BJ (cell line): ENCODE measurements at regions of chr16 and their contacts with region 1.

Region 1: GRCh38 chr16:19583665-19584300 is 28.3 kb downstream of the VPS35L start:
- DNase-seq: no peak
- H3K4me3 ChIP-seq: no peak overlapping the region
- H3K27me3 ChIP-seq: no peaks in the 10 kb centered on the region
- CTCF ChIP-seq: peak; percentile 95

Region 2: DNA sequence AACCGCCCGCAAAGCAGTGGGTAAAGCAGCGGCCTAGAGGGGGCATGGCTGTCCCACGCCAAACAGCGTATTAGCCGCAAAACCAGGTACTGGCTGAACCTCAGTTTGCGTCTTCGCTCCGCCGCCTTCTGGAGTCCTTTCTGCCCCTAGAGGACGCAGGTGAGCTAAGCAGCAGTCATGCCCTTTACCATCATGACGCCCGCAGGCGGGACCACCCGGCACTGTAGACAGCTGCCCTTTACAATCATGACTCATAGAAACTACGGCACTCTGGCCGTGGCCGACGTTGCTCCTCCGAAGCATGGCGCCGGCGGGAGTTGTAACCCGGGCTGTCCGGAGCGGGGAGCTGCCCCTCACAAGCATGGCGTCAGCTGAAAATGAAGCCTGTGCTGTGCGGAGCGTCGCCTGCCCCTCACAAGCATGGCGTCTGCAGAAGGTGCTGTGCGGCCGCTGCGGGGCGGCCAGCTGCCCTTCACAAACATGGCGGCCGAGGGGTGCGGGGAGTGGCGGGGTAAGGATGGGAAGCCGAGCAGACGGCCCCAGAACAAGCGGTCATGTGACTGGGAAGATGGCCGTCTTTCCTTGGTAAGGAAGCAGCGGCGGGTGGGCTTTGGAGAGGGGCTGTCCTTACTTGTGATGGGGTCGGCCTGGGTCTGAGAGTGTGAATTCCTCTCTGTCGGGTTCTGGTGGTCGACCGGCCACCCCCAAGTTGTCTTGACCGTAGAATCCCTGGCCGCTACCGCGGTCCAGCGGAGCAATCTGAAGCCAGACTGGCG is 28.4 kb before region 1 on chr16 and contains the start of gene VPS35L:
- CTCF ChIA-PET with region 1: interaction called, 24 read pairs
- POLR2A ChIA-PET with region 1: no interaction called
- DNase-seq: peak; percentile 94
- H3K4me3 ChIP-seq: peak within 1 kb of the TSS; percentile 72
- H3K27me3 ChIP-seq: no peaks in the 10 kb centered on the region
- CTCF ChIP-seq: peak; percentile 83
- polyA plus RNA-seq, gene VPS35L: 40.1 and 83.2 TPM in 2 replicates

Region 3: GRCh38 chr16:19595043-19595767 is 11.4 kb after region 1 on chr16:
- CTCF ChIA-PET with region 1: interaction called, 46 read pairs
- POLR2A ChIA-PET with region 1: no interaction called
- DNase-seq: peak; percentile 37
- H3K4me3 ChIP-seq: no peak overlapping the region
- H3K27me3 ChIP-seq: no peaks in the 10 kb centered on the region
- CTCF ChIP-seq: no peak

Region 4: GRCh38 chr16:19613834-19614233 is 30.1 kb after region 1 on chr16:
- CTCF ChIA-PET with region 1: interaction called, 10 read pairs
- POLR2A ChIA-PET with region 1: no interaction called
- DNase-seq: no peak
- H3K4me3 ChIP-seq: no peak overlapping the region
- H3K27me3 ChIP-seq: no peaks in the 10 kb centered on the region
- CTCF ChIP-seq: no peak

Region 5: DNA sequence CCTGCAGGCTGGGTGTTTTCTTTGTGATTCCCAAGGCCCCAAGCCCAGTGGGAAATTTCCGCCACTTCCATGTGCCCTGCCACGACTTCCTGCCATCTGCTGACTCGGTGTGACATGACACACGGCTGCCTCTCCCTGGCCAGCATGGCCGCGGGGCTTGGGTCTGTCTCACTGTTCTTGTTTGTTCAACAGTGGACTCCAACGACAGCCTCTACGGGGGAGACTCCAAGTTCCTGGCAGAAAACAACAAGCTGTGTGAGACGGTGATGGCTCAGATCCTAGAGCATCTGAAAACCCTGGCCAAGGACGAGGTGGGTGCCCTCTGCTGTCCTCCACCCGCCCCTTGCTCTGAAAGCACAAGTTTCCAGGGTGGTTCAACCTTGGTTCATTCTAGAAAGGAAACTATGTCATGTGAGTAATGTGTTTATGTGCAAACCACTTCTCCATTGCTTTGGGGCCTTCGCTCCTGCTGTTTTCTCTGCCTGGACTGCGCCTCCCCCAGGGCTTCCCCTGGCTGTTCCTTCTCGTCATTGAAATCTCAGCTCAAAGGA is 107.5 kb after region 1 on chr16:
- CTCF ChIA-PET with region 1: no interaction called
- POLR2A ChIA-PET with region 1: no interaction called
- DNase-seq: no peak
- H3K4me3 ChIP-seq: no peak overlapping the region
- H3K27me3 ChIP-seq: no peaks in the 10 kb centered on the region
- CTCF ChIP-seq: no peak

Region 6: DNA sequence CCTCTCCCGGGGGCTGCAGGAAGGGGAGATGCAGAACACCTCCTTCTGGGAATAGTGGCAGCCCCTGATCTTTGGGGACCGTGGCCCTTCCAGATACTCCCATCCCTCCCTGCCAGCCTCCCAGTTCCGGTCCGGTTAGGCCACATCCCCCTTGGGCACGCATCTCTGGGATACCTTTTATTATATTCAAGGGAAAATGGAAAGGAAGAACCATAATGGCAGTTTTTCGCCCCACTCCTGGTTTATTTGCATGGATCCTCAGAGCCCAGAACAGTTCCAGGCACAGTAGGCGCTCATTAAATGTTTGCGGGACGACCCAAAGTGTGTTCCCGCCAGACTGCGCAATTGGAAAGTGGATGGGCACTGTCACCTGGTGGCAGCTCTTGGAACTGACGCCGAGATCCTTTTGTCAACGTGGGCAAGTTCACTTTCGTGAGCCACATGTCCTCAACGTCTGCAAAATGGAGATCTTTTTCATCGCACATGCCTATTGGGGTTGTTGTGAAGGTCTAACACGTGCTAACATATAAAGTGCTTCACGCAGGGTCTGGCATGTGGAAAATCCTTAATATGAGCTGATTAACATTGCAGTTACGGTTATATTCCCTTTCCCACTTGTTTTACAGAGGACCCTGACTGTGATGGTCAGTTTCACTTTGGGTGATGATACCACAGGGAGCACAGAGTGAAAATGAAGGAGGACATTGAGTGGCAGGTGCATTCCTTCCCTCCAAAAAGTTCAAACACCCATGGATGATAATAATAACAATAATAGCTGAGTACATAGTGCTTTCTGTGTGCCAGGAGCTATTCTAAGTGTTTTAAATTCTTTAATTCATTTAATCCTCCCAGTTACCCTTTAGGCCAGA is 302.5 kb after region 1 on chr16:
- CTCF ChIA-PET with region 1: interaction called, 27 read pairs
- POLR2A ChIA-PET with region 1: no interaction called
- DNase-seq: no peak
- H3K4me3 ChIP-seq: no peak overlapping the region
- H3K27me3 ChIP-seq: peaks cover 15% of the 10 kb centered on the region
- CTCF ChIP-seq: peak; percentile 100